Right ventricle myocardium inferior (tissue), 1 donor: ENCODE measurements at regions of chr12 and their contacts with region 1.

Region 1: DNA sequence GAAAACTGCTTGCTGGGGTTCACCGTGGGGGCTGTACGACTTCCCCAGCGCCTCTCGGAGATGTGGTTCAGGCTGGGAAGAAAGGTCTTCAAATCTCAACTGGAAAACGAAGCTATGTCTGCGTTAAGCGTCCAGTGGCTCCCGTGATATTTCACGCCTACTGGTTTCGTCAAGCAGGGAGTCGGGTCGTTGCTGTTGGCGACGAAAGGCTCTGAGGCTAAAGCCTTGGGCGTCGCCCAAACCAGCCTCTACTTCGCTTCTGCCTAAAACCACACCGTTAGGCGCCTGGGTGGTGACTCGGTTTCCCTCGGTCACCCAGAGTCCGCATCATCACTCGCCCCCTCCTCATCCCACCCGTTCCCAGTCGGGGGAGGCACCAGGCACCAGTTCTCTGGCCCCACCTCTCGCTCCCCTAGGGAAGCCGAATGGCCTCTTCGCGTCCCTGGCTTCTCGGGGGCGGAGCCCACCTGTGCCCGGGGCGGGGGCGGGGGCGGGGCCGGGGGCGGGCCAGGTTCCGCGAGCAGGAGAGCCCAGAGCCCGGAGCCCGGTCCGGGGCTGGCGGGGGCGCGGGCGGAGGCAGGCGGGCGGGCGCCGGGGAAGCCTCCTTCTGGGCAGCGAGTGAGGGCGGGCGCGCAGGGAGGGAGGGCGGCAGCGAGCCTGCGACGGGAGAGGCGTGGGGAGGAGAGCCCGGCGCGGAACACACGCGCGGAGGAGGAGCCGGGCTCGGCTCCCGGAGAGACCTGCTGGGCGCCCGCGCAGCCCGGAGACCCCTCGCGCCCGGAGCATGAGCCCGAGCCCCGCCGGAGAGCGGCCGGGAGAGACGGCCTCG is at the start of gene B4GALNT3:
- DNase-seq: no peak
- ATAC-seq: peak; percentile 76
- total RNA-seq, gene B4GALNT3: 36.6 TPM

Region 2: GRCh38 chr12:503111-503761 is 43.6 kb after region 1 on chr12:
- intact Hi-C with region 1: loop called (anchors 5 kb)
- DNase-seq: no peak
- ATAC-seq: peak; percentile 47

Region 3: DNA sequence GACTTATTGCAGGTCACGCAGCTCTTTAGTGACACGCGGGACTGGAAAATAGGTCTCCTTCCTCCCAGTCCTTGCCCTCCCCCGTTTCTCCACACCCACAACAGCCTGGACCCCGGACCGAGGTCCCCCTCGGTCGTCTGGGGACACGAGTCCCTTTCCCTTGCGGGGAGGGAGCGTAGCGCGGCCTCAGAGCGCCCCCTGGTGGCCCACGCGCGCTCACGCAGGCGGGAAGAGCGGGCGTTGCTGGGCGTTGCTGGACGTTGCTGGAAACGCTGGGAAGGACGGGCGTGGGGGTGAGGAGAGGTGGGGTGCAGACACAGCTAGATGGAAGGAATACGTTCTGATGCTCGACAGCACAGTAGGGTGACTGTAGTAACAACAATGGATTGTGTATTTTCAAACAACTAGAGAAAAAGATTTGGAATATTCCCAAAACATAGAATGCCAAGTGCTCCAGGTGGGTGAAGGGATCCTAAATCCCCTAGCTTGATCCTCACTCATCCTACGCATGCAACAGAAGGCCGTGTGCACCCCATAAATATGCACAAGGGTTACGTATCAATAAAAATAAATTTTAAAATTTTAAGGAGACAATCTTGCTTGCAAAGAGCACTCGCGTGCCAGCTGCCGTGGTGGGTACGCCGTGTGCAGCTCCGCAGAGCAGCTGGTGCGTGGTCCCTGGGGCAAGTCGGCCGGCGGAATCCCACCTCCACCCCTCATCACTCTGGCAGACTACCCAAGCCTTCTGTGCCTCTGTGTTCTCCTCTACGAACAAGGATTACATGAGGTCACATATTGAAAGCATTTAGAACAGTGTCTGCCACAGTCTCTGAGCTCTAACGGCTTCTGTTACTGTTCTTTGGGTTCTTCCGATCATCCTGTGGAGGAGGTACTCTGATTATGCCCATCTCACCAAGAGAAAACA is 87.5 kb after region 1 on chr12:
- intact Hi-C with region 1: loop called (anchors 1 kb)
- DNase-seq: peak; percentile 85
- ATAC-seq: peak; percentile 42

Region 4: GRCh38 chr12:968545-968944 is 508.9 kb after region 1 on chr12:
- intact Hi-C with region 1: no loop called
- DNase-seq: no peak
- ATAC-seq: no peak